PC-3 (cell line): ENCODE measurements at regions of chr2 and their contacts with region 1.

Region 1: DNA sequence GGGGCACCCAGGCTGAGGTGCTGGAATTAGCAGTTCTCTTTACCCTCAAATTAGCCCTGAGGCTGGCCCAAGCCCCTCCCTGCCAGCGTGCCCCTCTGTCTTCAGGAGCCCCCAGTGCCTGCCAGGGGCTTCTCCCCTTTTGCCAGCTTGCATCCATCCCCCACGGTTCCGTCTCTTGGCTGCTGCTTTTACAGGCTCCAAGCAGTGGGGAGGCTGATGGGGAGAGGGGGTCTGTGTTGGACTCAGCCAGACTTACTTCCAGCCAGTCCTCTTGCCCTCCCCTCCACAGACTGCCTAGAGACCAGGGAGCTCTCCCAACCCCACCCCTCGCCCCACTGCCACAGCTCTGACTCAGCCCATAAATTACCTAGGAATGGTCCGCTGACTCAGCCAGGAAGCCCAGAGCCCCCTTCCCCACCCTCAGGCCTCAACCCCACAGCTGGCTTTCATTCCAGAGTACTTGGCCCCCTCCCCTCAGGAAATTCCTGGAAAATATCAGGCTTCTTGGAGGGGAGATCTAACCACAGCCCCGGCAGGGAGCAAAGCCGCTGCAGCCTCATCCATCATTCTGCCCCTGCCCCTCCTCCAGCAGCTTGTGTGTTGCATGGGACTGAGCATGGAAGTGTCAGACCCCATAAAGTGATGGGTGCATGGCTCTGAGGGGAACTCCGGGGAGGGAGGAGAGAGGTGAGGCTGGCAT is 184.6 kb downstream of the ZFP36L2 start:
- DNase-seq: peak; percentile 99
- ATAC-seq: peak; percentile 94
- H3K4me3 ChIP-seq: peak overlapping the region; percentile 40; the same call in 1 of the 2 replicates
- H3K27ac ChIP-seq: peak overlapping the region; percentile 98
- H3K4me1 ChIP-seq: peaks cover 50% of the 10 kb centered on the region
- H3K27me3 ChIP-seq: no peaks in the 10 kb centered on the region
- CTCF ChIP-seq: no peak

Region 2: DNA sequence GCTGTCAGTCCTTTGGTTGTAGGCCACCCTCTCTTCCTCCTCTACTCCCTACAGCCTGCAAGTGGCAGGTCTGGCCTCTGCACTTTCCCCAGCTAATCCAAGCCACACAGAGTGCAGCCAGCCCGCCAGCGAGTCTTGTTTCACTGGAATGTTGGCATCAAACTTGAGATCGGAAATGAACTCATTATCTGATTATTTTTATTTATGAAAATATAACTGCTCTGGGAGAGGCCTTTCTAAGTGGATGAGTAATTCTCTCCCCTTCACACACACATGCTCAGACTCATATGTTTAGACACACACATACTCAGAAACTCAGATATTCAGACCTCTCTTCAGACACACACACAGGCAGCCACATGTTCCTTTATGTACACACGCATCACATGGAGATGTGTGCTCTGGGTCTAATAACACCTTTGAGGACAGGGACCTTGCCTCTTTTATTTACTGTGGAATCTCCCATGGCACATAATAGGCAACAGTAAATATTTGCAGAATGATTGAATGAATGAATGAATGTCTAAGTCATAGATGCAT is 33.3 kb after region 1 on chr2:
- CTCF ChIA-PET with region 1: no interaction called
- POLR2A ChIA-PET with region 1: no interaction called
- intact Hi-C with region 1: loop called (anchors 1 kb)
- DNase-seq: peak; percentile 97
- ATAC-seq: peak; percentile 88
- H3K4me3 ChIP-seq: no peak overlapping the region
- H3K27ac ChIP-seq: peak overlapping the region; percentile 98
- H3K4me1 ChIP-seq: peaks cover 64% of the 10 kb centered on the region
- H3K27me3 ChIP-seq: no peaks in the 10 kb centered on the region
- CTCF ChIP-seq: no peak